ENCODE measurements at regions of chr7 and their contacts with region 1.

Region 1: GRCh38 chr7:11831736-11832495 is at the start of gene THSD7A:
- DNase-seq: no peak
- ATAC-seq: peak; percentile 91
- H3K4me3 ChIP-seq: peak within 1 kb of the TSS; percentile 74 to 76
- H3K27ac ChIP-seq: peak within 1 kb of the TSS; percentile 94
- H3K4me1 ChIP-seq: peaks cover 37% of the 10 kb centered on the region
- H3K27me3 ChIP-seq: no peaks in the 10 kb centered on the region
- CTCF ChIP-seq: peak; percentile 62
- total RNA-seq, gene THSD7A: 38.6 TPM

Region 2: GRCh38 chr7:11228515-11228914 is 603.4 kb before region 1 on chr7:
- CTCF ChIA-PET with region 1: no interaction called
- POLR2A ChIA-PET with region 1: no interaction called
- in situ Hi-C with region 1: no loop called
- intact Hi-C with region 1: no loop called
- DNase-seq: no peak
- ATAC-seq: no peak
- H3K4me3 ChIP-seq: no peak overlapping the region
- H3K27ac ChIP-seq: no peak overlapping the region
- H3K4me1 ChIP-seq: no peaks in the 10 kb centered on the region
- H3K27me3 ChIP-seq: peaks cover 9% of the 10 kb centered on the region
- CTCF ChIP-seq: no peak

Region 3: DNA sequence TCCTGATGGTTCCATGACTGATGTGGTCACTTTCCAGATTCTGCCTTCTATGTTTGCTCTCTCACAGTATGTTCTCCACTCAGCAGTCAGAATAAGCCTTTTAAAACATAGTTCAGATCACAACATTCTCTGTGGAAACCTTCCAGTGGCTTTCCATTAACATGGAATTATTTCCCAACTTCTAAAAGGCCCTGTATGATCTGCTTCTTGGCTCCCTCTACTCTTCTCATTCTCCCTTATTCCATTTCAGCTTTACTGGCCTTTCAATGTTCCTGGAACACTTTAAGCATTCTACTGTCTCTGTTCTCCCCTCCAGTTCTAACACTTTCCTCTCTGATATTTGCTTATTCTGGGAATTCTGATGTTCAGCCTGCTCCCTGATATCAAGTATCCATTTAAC is 325.5 kb before region 1 on chr7:
- CTCF ChIA-PET with region 1: no interaction called
- POLR2A ChIA-PET with region 1: no interaction called
- in situ Hi-C with region 1: no loop called
- intact Hi-C with region 1: no loop called
- DNase-seq: no peak
- ATAC-seq: no peak
- H3K4me3 ChIP-seq: no peak overlapping the region
- H3K27ac ChIP-seq: no peak overlapping the region
- H3K4me1 ChIP-seq: no peaks in the 10 kb centered on the region
- H3K27me3 ChIP-seq: no peaks in the 10 kb centered on the region
- CTCF ChIP-seq: no peak

Region 4: DNA sequence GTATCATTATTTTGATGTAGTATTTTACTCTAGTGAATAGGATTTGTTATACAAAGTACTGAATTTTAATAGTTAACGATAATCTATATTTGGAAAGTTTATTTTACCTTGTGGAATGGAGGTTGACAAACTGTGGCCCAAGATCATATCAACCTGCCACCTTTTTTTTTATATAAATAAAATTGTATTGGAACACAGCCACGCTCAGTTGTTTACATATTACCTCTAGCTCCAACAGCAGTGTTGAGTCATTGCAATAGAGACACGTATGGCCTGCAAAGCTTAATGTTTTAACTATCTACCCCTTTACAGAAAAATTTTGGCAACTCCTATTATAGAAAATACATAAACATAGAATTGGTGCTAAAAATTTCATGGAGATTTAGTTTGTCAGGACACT is 239.2 kb before region 1 on chr7:
- CTCF ChIA-PET with region 1: no interaction called
- POLR2A ChIA-PET with region 1: no interaction called
- in situ Hi-C with region 1: no loop called
- intact Hi-C with region 1: no loop called
- DNase-seq: no peak
- ATAC-seq: no peak
- H3K4me3 ChIP-seq: no peak overlapping the region
- H3K27ac ChIP-seq: no peak overlapping the region
- H3K4me1 ChIP-seq: peaks cover 5% of the 10 kb centered on the region; the same call in 1 of the 2 replicates
- H3K27me3 ChIP-seq: no peaks in the 10 kb centered on the region
- CTCF ChIP-seq: no peak

Region 5: DNA sequence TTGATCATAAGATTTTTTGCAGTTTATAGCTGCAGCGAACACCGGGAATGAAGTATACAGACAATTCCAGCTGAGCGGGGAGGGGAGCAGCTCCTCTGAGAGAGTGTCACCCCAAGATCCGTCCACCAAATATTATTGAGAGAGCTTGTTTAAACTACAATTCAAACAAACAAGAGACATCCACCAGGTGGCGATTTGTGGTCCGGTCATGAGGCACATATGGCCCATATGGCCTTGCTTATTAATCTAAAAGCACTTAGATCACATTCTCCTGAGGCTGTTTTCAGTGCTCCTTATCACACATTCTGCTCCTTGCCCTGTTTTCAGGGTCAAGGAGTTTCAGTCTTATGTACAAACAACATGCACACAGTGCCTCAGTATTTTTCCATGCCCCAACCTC is 83.0 kb before region 1 on chr7:
- CTCF ChIA-PET with region 1: interaction called, 6 read pairs
- POLR2A ChIA-PET with region 1: interaction called, 10 read pairs
- in situ Hi-C with region 1: no loop called
- intact Hi-C with region 1: no loop called
- DNase-seq: no peak
- ATAC-seq: no peak; the same call in 1 of the 2 replicates
- H3K4me3 ChIP-seq: no peak overlapping the region
- H3K27ac ChIP-seq: peak overlapping the region; percentile 95
- H3K4me1 ChIP-seq: peaks cover 43% of the 10 kb centered on the region
- H3K27me3 ChIP-seq: no peaks in the 10 kb centered on the region
- CTCF ChIP-seq: peak; percentile 60

Region 6: DNA sequence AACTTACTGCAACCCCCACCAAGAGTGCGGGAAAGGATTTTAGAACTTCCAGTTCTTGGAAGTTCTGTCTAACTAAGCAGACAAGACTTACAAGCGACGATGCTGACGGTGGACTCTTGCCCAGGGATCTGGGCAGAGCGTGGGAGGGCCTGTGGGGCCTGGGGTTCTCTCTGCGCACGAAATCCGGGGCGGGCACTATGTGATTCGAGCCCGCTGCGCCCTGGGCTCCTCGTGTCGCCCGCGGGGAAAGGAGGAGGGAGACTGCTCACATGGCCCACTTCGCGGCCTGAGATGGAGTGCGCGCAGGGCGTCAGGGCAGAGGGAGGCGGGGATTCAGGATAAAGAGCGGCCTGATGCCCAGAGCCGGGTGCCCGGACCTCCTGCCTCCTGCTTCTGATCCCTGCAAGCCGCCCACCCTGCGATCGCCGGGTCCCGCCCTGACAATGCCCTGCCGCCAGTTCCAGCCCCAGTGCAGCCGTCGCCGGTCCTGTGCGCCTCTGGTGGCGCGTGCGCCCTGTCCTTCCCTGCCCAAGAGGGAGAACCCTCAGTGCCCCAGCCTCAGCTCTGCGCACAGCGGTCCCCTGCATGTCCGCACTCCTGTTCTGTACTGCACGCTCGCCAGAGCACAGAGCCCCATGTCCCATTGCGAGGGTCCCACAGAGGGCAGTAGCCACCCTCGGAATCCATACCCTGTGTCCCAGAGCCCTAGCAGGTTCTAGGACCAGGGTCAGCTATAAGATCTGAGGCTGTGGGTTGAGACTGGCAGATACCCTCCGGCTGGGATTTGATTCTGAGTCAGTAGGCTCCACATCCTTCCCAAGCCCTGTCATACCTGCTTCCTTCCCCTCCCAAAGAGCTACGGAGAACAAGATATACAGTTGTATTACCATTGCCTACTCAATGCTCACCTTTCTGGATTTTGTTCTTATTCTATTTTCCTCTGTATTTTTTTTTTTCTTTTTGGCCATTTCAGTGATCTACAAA is 279.8 kb after region 1 on chr7:
- CTCF ChIA-PET with region 1: no interaction called
- POLR2A ChIA-PET with region 1: no interaction called
- in situ Hi-C with region 1: no loop called
- intact Hi-C with region 1: loop called (anchors 1 kb)
- DNase-seq: peak; percentile 67
- ATAC-seq: peak; percentile 93
- H3K4me3 ChIP-seq: peak overlapping the region; percentile 57 to 63
- H3K27ac ChIP-seq: peak overlapping the region; percentile 97
- H3K4me1 ChIP-seq: peaks cover 47% of the 10 kb centered on the region
- H3K27me3 ChIP-seq: no peaks in the 10 kb centered on the region
- CTCF ChIP-seq: peak; percentile 75

Region 7: DNA sequence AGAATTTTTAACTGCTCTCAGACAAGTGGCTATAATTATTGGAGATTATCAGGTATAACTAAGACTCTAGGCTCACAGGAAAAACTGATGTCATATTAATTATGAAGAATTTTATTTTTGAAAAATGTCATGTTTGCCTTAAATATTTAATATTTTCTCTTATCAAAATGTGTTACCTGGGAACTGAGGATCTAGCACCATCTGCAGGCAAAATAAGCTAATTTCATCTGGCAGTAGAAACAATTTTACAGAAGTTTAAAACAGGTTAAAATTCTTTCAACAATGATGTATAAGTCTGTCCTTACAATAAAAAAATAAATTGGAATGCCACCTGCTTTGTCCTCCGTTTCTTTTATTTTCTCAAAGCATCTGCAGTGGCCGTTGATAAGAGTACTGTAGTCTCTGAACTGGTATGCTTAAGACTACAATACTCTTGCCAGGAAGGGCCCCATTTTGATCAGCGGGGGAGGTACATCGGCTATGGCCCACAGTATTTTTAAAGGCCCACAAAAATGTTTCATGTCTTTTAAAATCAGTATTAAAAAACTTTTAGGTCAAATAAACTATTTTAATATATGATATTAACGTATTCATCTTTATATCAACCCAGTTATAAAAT is 490.5 kb after region 1 on chr7:
- CTCF ChIA-PET with region 1: interaction called, 4 read pairs
- POLR2A ChIA-PET with region 1: no interaction called
- in situ Hi-C with region 1: no loop called
- intact Hi-C with region 1: loop called (anchors 2 kb)
- DNase-seq: peak; percentile 41
- ATAC-seq: peak; percentile 65; the same call in 1 of the 2 replicates
- H3K4me3 ChIP-seq: no peak overlapping the region
- H3K27ac ChIP-seq: peak overlapping the region; percentile 80
- H3K4me1 ChIP-seq: peaks cover 12% of the 10 kb centered on the region; the same call in 1 of the 2 replicates
- H3K27me3 ChIP-seq: no peaks in the 10 kb centered on the region
- CTCF ChIP-seq: peak; percentile 88

Region 8: DNA sequence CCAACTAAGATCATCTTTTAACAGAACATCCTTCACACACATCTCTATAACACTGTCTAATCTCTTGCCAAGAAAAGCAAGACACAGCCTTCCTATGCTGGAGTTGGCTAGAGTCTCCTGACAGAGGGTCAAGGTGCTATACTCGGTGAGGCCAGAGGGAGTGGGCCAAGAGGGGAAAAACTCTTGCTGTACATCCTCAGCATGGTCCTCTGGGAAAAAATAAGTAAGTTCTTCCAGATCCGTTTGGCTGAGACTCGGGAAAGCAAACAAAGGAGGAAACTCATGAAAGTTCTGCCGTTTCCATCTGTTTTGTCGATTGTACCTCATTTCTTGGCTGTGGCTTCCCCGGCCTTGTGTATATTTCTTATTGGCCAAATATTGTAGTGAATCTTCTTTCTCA is 537.8 kb after region 1 on chr7:
- CTCF ChIA-PET with region 1: no interaction called
- POLR2A ChIA-PET with region 1: no interaction called
- in situ Hi-C with region 1: no loop called
- intact Hi-C with region 1: no loop called
- DNase-seq: no peak
- ATAC-seq: 0 out of 2 replicates have a peak, but pooled peaks have one; percentile 45
- H3K4me3 ChIP-seq: no peak overlapping the region
- H3K27ac ChIP-seq: no peak overlapping the region
- H3K4me1 ChIP-seq: no peaks in the 10 kb centered on the region
- H3K27me3 ChIP-seq: no peaks in the 10 kb centered on the region
- CTCF ChIP-seq: no peak